ENCODE measurements at regions of chr21 and their contacts with region 1.

Region 1: GRCh38 chr21:14259747-14260146 is 43.8 kb downstream of the RBM11 start:
- DNase-seq: no peak
- H3K4me3 Mint-ChIP-seq: no peak overlapping the region
- H3K27ac Mint-ChIP-seq: no peak overlapping the region
- H3K4me1 Mint-ChIP-seq: peaks cover 8% of the 10 kb centered on the region
- H3K27me3 Mint-ChIP-seq: no peaks in the 10 kb centered on the region

Region 2: GRCh38 chr21:14040386-14040785 is 219.4 kb before region 1 on chr21:
- CTCF ChIA-PET with region 1: no interaction called
- intact Hi-C with region 1: no loop called
- DNase-seq: no peak
- H3K4me3 Mint-ChIP-seq: no peak overlapping the region
- H3K27ac Mint-ChIP-seq: no peak overlapping the region
- H3K4me1 Mint-ChIP-seq: no peaks in the 10 kb centered on the region
- H3K27me3 Mint-ChIP-seq: no peaks in the 10 kb centered on the region

Region 3: GRCh38 chr21:14239281-14239680 is 20.5 kb before region 1 on chr21:
- CTCF ChIA-PET with region 1: interaction called, 14 read pairs
- intact Hi-C with region 1: no loop called
- DNase-seq: no peak
- H3K4me3 Mint-ChIP-seq: no peak overlapping the region
- H3K27ac Mint-ChIP-seq: no peak overlapping the region
- H3K4me1 Mint-ChIP-seq: peaks cover 2% of the 10 kb centered on the region
- H3K27me3 Mint-ChIP-seq: peaks cover 5% of the 10 kb centered on the region

Region 4: DNA sequence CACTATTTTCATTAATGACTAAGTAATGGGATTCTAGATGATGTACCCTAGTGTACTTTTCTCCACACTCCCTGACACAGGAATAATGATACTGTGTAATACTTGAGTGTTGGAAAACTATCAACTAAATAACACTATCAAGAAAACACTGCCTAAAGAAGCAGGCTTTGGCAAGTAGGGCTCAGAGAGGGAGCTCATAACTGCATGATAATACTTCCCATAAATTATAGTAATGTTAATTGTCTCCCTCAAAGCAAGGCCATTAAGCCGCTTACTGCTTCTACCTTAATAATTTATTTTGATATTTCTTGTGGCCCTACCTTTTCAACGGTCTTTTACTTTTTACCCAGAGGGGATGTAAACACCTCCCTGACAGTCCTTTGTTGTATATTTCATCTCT is 217.4 kb after region 1 on chr21:
- CTCF ChIA-PET with region 1: no interaction called
- intact Hi-C with region 1: no loop called
- DNase-seq: no peak
- H3K4me3 Mint-ChIP-seq: no peak overlapping the region
- H3K27ac Mint-ChIP-seq: no peak overlapping the region
- H3K4me1 Mint-ChIP-seq: peaks cover 27% of the 10 kb centered on the region
- H3K27me3 Mint-ChIP-seq: no peaks in the 10 kb centered on the region

Measured in activated naive CD4-positive, alpha-beta T cell treated with anti-CD3 and anti-CD28 coated beads for 36 hours (primary cell).